ENCODE measurements at regions of chr2 and their contacts with region 1.

Region 1: DNA sequence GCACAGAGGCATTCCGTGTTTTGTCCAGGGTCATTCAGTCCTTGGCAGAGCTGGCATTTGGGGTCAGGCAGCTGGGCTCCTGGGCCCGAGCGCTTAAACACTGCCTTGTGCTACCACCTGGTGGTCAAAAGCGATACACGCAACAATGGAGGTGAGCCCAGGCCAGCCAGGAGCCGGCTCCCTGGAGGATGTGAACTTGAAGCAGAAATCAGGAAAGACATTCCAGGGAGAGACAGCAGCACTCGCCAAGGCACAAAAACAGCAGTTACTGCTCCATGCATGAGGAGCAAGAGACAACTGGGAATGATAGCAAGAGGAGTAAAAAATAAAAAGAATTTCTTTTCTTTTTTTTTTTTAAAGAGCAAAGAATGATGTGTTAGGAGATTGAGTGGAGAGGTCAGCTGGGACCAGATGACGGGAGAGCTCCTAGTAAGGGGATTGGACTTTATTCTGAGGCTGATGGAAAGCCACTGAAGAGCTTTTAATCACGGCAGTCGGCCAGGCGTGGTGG is 20.7 kb downstream of the SCYGR8 start:
- DNase-seq: peak; percentile 23 to 72 (median 46)
- ATAC-seq: peak; percentile 56
- H3K4me3 ChIP-seq: no peak overlapping the region
- H3K4me3 Mint-ChIP-seq: no peak overlapping the region
- H3K27ac ChIP-seq: no peak overlapping the region
- H3K27ac Mint-ChIP-seq: no peak overlapping the region
- H3K4me1 ChIP-seq: no peaks in the 10 kb centered on the region
- H3K4me1 Mint-ChIP-seq: no peaks in the 10 kb centered on the region
- H3K27me3 ChIP-seq: no peaks in the 10 kb centered on the region
- H3K27me3 Mint-ChIP-seq: no peaks in the 10 kb centered on the region
- CTCF ChIP-seq: peak; percentile 74

Region 2: GRCh38 chr2:227125506-227125905 is 640.9 kb before region 1 on chr2:
- CTCF ChIA-PET with region 1: no interaction called
- POLR2A ChIA-PET with region 1: no interaction called
- intact Hi-C with region 1: loop called (anchors 1 to 2 kb)
- DNase-seq: no peak
- ATAC-seq: no peak
- H3K4me3 ChIP-seq: no peak overlapping the region
- H3K4me3 Mint-ChIP-seq: no peak overlapping the region
- H3K27ac ChIP-seq: no peak overlapping the region
- H3K27ac Mint-ChIP-seq: no peak overlapping the region
- H3K4me1 ChIP-seq: no peaks in the 10 kb centered on the region
- H3K4me1 Mint-ChIP-seq: no peaks in the 10 kb centered on the region
- H3K27me3 ChIP-seq: no peaks in the 10 kb centered on the region
- H3K27me3 Mint-ChIP-seq: peaks cover 24% of the 10 kb centered on the region
- CTCF ChIP-seq: no peak

Region 3: GRCh38 chr2:227238238-227239237 is 527.9 kb before region 1 on chr2:
- CTCF ChIA-PET with region 1: no interaction called
- POLR2A ChIA-PET with region 1: no interaction called
- intact Hi-C with region 1: loop called in 1 of 2 experiments (anchors 5 kb)
- DNase-seq: peak; percentile 31 to 69 (median 47)
- ATAC-seq: no peak
- H3K4me3 ChIP-seq: no peak overlapping the region
- H3K4me3 Mint-ChIP-seq: no peak overlapping the region
- H3K27ac ChIP-seq: no peak overlapping the region
- H3K27ac Mint-ChIP-seq: no peak overlapping the region
- H3K4me1 ChIP-seq: no peaks in the 10 kb centered on the region
- H3K4me1 Mint-ChIP-seq: no peaks in the 10 kb centered on the region
- H3K27me3 ChIP-seq: no peaks in the 10 kb centered on the region
- H3K27me3 Mint-ChIP-seq: peaks cover 19% of the 10 kb centered on the region
- CTCF ChIP-seq: peak; percentile 98

Region 4: GRCh38 chr2:227406177-227407031 is 360.0 kb before region 1 on chr2:
- CTCF ChIA-PET with region 1: no interaction called
- POLR2A ChIA-PET with region 1: no interaction called
- intact Hi-C with region 1: loop called in 1 of 2 experiments (anchors 2 kb)
- DNase-seq: peak in 2 of 14 experiments; percentile 15 to 17
- ATAC-seq: no peak
- H3K4me3 ChIP-seq: no peak overlapping the region
- H3K4me3 Mint-ChIP-seq: no peak overlapping the region
- H3K27ac ChIP-seq: no peak overlapping the region
- H3K27ac Mint-ChIP-seq: peak overlapping the region; percentile 22
- H3K4me1 ChIP-seq: peaks cover 9% of the 10 kb centered on the region
- H3K4me1 Mint-ChIP-seq: peaks cover 25% of the 10 kb centered on the region
- H3K27me3 ChIP-seq: no peaks in the 10 kb centered on the region
- H3K27me3 Mint-ChIP-seq: no peaks in the 10 kb centered on the region
- CTCF ChIP-seq: no peak

Region 5: DNA sequence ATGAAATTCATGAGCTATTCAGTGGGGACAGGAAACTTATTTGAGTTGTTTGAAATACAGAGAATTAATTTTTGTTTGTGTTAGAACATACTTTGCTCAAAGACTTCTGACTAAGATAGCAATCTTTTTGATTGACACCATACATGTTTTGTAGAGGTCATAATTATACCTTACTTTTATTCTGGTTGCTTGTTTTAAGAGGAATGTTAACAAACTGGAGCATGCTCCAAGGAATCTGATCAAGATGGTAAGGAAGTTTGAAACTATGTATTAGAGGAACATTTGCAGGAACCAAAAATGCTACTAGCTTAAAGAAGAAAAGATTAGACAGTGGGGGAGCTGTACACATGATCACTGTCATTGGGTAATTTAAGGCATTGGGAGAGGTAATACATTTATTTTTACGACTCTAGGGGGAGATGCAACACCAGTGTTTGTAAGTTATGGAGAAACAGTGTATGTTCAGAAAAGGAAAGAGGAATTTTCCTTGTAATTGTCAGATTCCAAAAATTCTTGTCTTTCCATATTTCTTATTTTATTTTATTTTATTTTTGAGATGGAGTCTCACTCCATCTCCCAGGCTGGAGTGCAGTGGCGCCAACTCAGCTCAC is 286.5 kb before region 1 on chr2:
- CTCF ChIA-PET with region 1: no interaction called
- POLR2A ChIA-PET with region 1: no interaction called
- intact Hi-C with region 1: loop called in 1 of 2 experiments (anchors 2 kb)
- DNase-seq: peak in 3 of 14 experiments; percentile 39 to 45 (median 43)
- ATAC-seq: peak; percentile 75
- H3K4me3 ChIP-seq: no peak overlapping the region
- H3K4me3 Mint-ChIP-seq: peak overlapping the region; percentile 13
- H3K27ac ChIP-seq: no peak overlapping the region
- H3K27ac Mint-ChIP-seq: peak overlapping the region; percentile 38
- H3K4me1 ChIP-seq: peaks cover 12% of the 10 kb centered on the region
- H3K4me1 Mint-ChIP-seq: peaks cover 81% of the 10 kb centered on the region
- H3K27me3 ChIP-seq: no peaks in the 10 kb centered on the region
- H3K27me3 Mint-ChIP-seq: no peaks in the 10 kb centered on the region
- CTCF ChIP-seq: peak; percentile 36

Region 6: GRCh38 chr2:227623234-227623633 is 143.2 kb before region 1 on chr2:
- CTCF ChIA-PET with region 1: no interaction called
- POLR2A ChIA-PET with region 1: no interaction called
- intact Hi-C with region 1: no loop called
- DNase-seq: no peak
- ATAC-seq: no peak
- H3K4me3 ChIP-seq: no peak overlapping the region
- H3K4me3 Mint-ChIP-seq: no peak overlapping the region
- H3K27ac ChIP-seq: no peak overlapping the region
- H3K27ac Mint-ChIP-seq: no peak overlapping the region
- H3K4me1 ChIP-seq: no peaks in the 10 kb centered on the region
- H3K4me1 Mint-ChIP-seq: no peaks in the 10 kb centered on the region
- H3K27me3 ChIP-seq: peaks cover 0 to 4% of the 10 kb centered on the region in 2 experiments
- H3K27me3 Mint-ChIP-seq: no peaks in the 10 kb centered on the region
- CTCF ChIP-seq: no peak

Measured in CD4-positive, alpha-beta T cell (primary cell).